ENCODE measurements at regions of chr12 and their contacts with region 1.

Region 1: GRCh38 chr12:126874427-126875026 is 1392.4 kb upstream of the TMEM132C start:
- DNase-seq: peak; percentile 78
- ATAC-seq: peak; percentile 98
- H3K4me3 ChIP-seq: no peak overlapping the region
- H3K27ac ChIP-seq: no peak overlapping the region
- H3K4me1 ChIP-seq: no peaks in the 10 kb centered on the region
- H3K27me3 ChIP-seq: peaks cover 80% of the 10 kb centered on the region
- CTCF ChIP-seq: peak; percentile 98

Region 2: DNA sequence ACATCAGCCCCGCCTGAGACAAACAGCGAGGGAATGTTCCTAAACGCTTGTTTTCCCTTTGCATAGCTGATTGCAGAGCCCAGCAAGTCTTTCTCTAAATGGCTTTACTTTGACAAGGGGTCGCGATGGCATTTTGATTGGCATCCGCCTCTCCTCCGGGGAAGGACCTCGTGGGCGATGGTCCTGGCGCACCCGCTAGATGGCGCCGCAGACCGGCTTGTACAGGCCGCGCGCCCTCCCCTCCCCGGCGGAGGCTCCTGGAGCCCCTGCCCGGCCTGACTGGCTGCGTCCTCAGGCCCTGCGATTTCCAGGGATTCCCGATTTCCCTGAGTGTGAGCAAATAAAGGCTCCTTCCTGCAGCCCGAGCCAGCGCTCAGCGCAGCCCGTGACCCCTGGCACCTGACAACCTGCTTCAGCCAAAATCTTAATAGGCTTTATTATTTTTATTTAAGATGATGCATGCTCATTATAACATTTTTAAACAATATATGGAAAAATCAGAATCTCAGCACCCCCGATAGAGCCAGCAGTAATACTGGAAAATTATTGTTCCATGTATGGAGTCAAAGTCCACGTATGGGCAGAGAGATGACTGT is 1341.0 kb before region 1 on chr12:
- CTCF ChIA-PET with region 1: no interaction called
- POLR2A ChIA-PET with region 1: no interaction called
- intact Hi-C with region 1: loop called (anchors 5 kb)
- DNase-seq: peak; percentile 51
- ATAC-seq: peak; percentile 83
- H3K4me3 ChIP-seq: no peak overlapping the region
- H3K27ac ChIP-seq: no peak overlapping the region
- H3K4me1 ChIP-seq: no peaks in the 10 kb centered on the region
- H3K27me3 ChIP-seq: peaks cover 63% of the 10 kb centered on the region
- CTCF ChIP-seq: peak; percentile 85

Region 3: GRCh38 chr12:126784328-126784921 is 90.1 kb before region 1 on chr12:
- CTCF ChIA-PET with region 1: no interaction called
- POLR2A ChIA-PET with region 1: no interaction called
- intact Hi-C with region 1: loop called (anchors 1 kb)
- DNase-seq: peak; percentile 81
- ATAC-seq: peak; percentile 84
- H3K4me3 ChIP-seq: no peak overlapping the region
- H3K27ac ChIP-seq: no peak overlapping the region
- H3K4me1 ChIP-seq: no peaks in the 10 kb centered on the region
- H3K27me3 ChIP-seq: peaks cover 76% of the 10 kb centered on the region
- CTCF ChIP-seq: peak; percentile 95

Region 4: DNA sequence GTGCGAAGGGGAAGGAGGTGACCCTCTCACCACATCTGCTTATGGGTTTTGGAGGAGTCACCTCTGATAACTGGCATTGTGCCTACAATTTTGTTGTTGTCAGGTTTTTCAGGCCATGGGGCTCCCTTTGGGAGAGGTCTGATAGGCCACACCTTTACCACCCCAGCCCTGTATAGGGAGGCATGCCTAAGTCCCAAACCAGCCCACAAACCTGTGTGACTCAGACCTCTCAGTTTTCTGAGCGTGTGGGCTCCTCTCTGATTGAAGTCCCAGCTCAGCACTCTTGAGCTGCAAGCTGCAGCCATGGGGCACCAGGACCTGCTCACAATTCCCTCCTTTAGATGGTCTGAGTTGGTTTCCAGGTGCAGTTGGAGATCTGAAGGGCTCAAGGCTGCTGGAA is 36.8 kb before region 1 on chr12:
- CTCF ChIA-PET with region 1: no interaction called
- POLR2A ChIA-PET with region 1: no interaction called
- intact Hi-C with region 1: no loop called
- DNase-seq: no peak
- ATAC-seq: no peak
- H3K4me3 ChIP-seq: no peak overlapping the region
- H3K27ac ChIP-seq: no peak overlapping the region
- H3K4me1 ChIP-seq: no peaks in the 10 kb centered on the region
- H3K27me3 ChIP-seq: peaks cover 16% of the 10 kb centered on the region
- CTCF ChIP-seq: no peak